Heart right ventricle (tissue), 16 donors: ENCODE measurements at regions of chr5 and their contacts with region 1.

Region 1: DNA sequence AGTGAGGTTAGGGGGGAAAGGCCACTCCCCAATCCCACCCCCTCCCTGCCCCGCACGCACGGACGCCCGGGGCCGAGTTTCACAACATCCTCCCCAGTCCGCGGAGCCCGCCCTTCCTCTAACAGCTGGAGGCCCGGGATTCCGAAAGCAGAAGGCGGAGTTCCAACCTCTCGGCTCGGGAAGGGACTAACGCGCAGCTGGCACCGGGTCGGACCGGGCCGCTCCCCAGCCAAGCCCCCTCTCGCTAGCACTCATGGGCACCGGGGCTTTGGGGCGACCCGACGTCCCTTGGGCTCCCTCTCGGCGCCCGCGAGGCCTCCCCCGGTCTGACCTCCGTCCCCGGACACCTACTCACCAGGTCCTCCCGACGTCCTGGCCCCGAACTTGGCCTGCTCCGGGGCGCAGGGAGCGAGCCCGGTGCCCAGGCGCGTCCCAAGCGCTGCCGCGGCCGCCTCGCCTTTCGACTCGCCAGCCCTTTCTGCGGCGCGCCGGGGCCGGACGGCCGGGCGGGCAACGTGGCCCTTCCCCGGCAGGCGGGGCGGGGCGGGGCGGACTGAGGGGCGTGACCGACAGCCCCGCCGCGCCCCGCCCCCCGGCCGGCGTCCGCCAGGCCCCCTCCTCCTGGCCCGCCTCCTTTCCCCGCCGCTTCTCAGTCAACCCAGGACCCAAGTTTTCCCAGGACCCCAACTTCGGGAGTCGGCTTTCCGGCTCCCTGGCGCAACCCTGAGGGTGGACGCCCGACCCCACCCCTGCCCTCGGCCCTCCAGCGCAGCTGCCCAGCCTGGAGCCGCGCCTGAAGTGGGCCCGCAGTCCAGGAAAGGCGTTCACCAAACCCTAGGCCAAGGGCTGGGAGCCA is at the start of gene MGAT1:
- DNase-seq: peak; percentile 91 to 92
- ATAC-seq: peak; percentile 81 to 95 (median 90)
- H3K4me3 ChIP-seq: peak within 1 kb of the TSS; percentile 69 to 100 (median 99)
- H3K27ac ChIP-seq: peak within 1 kb of the TSS; percentile 98 to 100 (median 99)
- H3K4me1 ChIP-seq: peaks cover 23 to 93% (median 89%) of the 10 kb centered on the region in 9 donors
- H3K27me3 ChIP-seq: no peaks in the 10 kb centered on the region
- CTCF ChIP-seq: no peak
- total RNA-seq, gene MGAT1: 50.1 to 118 (median 59.7) TPM

Region 2: DNA sequence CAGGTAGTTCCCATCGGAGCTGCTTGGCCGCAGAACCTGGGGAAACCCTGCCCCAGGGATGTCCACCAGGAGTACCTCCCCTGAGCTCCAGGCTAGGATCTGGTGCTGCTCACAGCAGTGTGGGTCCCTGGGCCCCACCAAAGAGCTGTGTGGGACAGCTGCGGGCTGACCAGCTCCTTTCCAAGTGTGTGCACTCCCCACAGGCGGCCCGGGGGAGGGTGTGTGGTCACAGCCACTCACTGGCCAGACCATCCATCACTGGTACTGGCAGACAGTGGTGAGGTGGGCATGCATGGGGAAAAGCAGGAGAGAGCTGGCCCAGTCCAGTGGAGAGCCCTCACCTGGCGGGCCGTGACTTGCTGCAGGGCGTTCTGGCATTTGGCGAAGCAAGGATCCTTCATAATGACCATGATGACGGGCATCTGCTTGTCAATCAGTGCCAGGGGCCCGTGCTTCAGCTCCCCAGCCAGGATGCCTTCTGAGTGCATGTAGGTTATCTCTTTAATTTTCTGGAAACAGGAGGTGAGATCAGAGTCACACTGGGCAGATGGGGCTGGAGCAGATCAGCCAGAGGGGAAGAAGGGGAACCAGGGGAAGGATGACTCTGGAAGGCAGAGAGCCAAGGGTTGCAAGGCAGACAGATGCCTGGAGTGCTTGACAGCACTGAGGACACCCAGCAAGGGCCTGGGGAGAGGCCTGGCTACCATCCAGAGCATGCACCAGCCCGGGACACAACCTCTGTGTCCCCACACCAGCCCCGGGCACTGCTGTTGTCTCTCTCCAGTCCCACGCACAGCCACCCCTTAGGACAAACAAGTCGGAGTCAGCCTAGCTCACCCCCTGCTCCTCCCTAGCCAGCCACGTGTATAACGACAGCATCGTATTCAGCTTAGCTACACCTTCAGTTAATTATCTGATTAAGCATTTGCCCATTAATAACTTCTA is 497.9 kb before region 1 on chr5:
- intact Hi-C with region 1: no loop called
- DNase-seq: no peak
- ATAC-seq: peak in 2 of 8 donors; percentile 22 to 24
- H3K4me3 ChIP-seq: no peak overlapping the region
- H3K27ac ChIP-seq: no peak overlapping the region
- H3K4me1 ChIP-seq: no peaks in the 10 kb centered on the region
- H3K27me3 ChIP-seq: no peaks in the 10 kb centered on the region
- CTCF ChIP-seq: no peak

Region 3: DNA sequence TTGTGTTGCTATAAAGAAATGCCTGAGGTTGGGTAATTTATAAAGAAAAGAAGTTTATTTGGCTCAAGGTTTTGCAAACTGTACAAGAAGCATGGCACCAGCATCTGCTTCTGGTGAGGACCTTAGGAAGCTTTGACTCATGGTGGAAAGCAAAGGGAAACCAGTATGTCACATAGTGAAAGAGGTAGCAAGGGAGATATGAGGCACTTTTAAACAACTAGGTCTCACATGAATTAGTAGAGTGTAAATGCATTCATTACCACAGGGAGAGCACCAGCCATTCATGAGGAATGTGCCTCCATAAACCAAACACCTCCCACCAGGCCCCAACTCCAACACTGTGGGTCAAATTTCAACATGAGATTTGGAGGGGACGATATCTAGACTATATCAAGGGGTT is 103.5 kb before region 1 on chr5:
- intact Hi-C with region 1: no loop called
- DNase-seq: no peak
- ATAC-seq: no peak
- H3K4me3 ChIP-seq: no peak overlapping the region
- H3K27ac ChIP-seq: no peak overlapping the region
- H3K4me1 ChIP-seq: no peaks in the 10 kb centered on the region
- H3K27me3 ChIP-seq: peaks cover 0 to 13% (median 6%) of the 10 kb centered on the region in 7 donors
- CTCF ChIP-seq: no peak

Region 4: GRCh38 chr5:180825768-180826525 is 23.4 kb after region 1 on chr5:
- intact Hi-C with region 1: loop called in 1 of 10 experiments (anchors 2 kb)
- DNase-seq: no peak
- ATAC-seq: peak in 3 of 8 donors; percentile 20 to 46 (median 33)
- H3K4me3 ChIP-seq: no peak overlapping the region
- H3K27ac ChIP-seq: peak overlapping the region in 9 of 10 donors; percentile 13 to 70 (median 50)
- H3K4me1 ChIP-seq: peaks cover 9 to 67% (median 58%) of the 10 kb centered on the region in 9 donors
- H3K27me3 ChIP-seq: no peaks in the 10 kb centered on the region
- CTCF ChIP-seq: no peak

Region 5: DNA sequence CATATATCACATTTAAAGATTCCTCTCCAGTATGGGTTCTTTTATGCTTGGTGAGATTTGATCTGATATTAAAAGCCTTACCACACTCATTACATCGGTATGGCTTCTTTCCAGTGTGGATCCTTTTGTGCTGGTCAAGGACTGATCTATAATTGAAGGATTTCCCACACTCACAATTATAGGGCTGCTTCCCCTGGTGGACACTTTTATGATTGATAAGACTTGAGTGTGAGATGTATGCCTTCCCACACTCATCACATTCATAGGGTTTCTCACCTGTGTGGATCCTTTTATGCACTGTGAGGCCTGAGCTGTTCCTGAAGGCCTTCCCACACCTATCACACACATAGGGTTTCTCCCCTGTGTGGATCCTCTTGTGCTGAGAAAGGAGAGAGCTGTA is 46.3 kb after region 1 on chr5:
- intact Hi-C with region 1: loop called in 2 of 10 experiments (anchors 10 kb)
- DNase-seq: no peak
- ATAC-seq: no peak
- H3K4me3 ChIP-seq: no peak overlapping the region
- H3K27ac ChIP-seq: no peak overlapping the region
- H3K4me1 ChIP-seq: peaks cover 0 to 20% (median 9%) of the 10 kb centered on the region in 9 donors
- H3K27me3 ChIP-seq: no peaks in the 10 kb centered on the region
- CTCF ChIP-seq: no peak

Region 6: GRCh38 chr5:180868960-180869359 is 66.4 kb after region 1 on chr5:
- intact Hi-C with region 1: loop called in 3 of 10 experiments (anchors 5 kb)
- DNase-seq: peak; percentile 78 to 84
- ATAC-seq: peak in 7 of 8 donors; percentile 55 to 90 (median 80)
- H3K4me3 ChIP-seq: no peak overlapping the region
- H3K27ac ChIP-seq: no peak overlapping the region
- H3K4me1 ChIP-seq: peaks cover 0 to 14% (median 4%) of the 10 kb centered on the region in 9 donors
- H3K27me3 ChIP-seq: peaks cover 0 to 11% (median 0%) of the 10 kb centered on the region in 7 donors
- CTCF ChIP-seq: peak; percentile 57 to 81 (median 77)

Region 7: DNA sequence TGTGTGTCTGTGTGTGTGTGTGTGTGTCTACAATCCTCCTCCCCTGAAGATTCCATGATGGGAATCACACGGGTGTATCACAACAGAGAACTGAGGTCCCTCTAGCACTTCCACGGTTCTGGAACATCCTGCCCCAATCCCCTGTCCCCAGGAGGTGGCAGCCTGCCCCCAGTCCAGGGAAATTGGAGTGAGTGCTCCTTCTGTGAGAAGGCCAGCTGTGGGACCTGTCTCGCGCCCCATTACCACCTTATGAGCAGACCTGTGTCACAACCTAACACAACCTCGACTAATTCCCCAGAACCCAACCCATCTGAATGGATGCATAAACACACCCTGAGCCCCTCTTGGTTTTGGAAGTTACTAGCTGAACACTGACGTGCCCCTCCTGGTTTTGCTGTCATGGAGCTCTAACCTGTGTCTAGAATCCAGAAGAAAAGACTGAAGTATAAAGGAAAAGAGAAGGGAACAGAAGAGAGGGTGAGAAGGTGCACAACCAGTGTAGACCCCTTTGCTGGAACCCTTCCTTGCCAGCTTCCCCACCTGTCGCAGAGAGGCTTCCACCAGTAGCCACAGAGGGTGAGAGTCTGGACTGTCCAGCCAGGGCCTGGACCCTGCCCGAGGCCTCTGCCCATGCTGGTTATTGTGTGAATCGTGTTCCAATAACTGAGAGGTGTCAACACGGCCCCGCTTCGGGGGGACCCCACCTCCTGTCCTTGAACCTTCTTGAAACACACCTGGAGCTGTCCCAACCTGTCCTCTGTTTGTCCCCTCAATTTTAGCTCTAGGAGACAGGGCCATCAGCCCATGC is 240.9 kb after region 1 on chr5:
- intact Hi-C with region 1: loop called in 2 of 10 experiments (anchors 5 to 10 kb)
- DNase-seq: no peak
- ATAC-seq: peak in 7 of 8 donors; percentile 35 to 60 (median 45)
- H3K4me3 ChIP-seq: peak overlapping the region in 9 of 10 donors; percentile 4 to 62 (median 48)
- H3K27ac ChIP-seq: peak overlapping the region; percentile 14 to 93 (median 86)
- H3K4me1 ChIP-seq: peaks cover 0 to 24% (median 4%) of the 10 kb centered on the region in 9 donors
- H3K27me3 ChIP-seq: peaks cover 0 to 46% (median 33%) of the 10 kb centered on the region in 7 donors
- CTCF ChIP-seq: peak in 5 of 9 donors; percentile 24 to 47 (median 33)

Region 8: GRCh38 chr5:181159286-181159829 is 356.8 kb after region 1 on chr5:
- intact Hi-C with region 1: loop called in 1 of 10 experiments (anchors 5 kb)
- DNase-seq: peak; percentile 82 to 88
- ATAC-seq: peak; percentile 85 to 96 (median 90)
- H3K4me3 ChIP-seq: no peak overlapping the region
- H3K27ac ChIP-seq: no peak overlapping the region
- H3K4me1 ChIP-seq: peaks cover 0 to 15% (median 5%) of the 10 kb centered on the region in 9 donors
- H3K27me3 ChIP-seq: peaks cover 0 to 41% (median 6%) of the 10 kb centered on the region in 7 donors
- CTCF ChIP-seq: peak; percentile 69 to 93 (median 87)